Spleen (tissue), 13 donors: ENCODE measurements at regions of chr4 and their contacts with region 1.

Region 1: DNA sequence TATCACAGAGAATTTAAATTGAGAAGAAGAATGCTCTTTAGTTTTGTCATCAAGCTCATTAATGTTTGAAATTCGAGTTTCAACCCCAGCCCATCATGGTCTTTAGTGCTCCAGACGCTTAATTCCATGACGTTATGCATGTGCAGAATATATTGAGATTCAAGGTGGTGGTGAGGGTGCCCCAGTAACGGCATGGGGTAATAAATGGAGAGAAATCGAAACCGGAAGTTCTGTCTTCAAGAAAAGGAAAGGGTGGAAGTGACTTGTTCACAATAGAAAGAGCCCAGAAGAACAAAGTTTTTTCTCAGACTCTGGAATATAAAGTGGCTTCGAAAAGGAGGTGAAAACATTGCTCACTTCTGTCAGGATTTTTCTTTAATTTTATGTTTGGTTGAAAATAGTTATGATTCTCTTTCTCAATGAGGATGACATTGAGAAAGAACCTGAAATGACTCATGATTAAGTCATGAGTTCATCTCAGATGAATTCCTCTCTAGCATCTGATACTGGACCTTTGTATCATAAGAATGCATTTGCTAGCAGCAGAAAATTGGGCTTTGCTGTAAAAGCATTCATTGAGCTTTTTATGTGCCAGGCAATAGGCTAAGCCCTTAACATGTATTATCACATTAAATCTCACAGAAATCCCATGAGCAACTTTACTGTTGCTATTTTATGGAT is 779 bp upstream of the DDX60L start:
- DNase-seq: no peak
- H3K4me3 ChIP-seq: peak overlapping the region; percentile 59 to 84 (median 74)
- H3K27ac ChIP-seq: peak overlapping the region; percentile 90 to 99 (median 98)
- H3K4me1 ChIP-seq: peaks cover 11 to 48% (median 25%) of the 10 kb centered on the region in 6 donors
- H3K27me3 ChIP-seq: no peaks in the 10 kb centered on the region
- CTCF ChIP-seq: no peak
- POLR2A ChIP-seq: no peak

Region 2: DNA sequence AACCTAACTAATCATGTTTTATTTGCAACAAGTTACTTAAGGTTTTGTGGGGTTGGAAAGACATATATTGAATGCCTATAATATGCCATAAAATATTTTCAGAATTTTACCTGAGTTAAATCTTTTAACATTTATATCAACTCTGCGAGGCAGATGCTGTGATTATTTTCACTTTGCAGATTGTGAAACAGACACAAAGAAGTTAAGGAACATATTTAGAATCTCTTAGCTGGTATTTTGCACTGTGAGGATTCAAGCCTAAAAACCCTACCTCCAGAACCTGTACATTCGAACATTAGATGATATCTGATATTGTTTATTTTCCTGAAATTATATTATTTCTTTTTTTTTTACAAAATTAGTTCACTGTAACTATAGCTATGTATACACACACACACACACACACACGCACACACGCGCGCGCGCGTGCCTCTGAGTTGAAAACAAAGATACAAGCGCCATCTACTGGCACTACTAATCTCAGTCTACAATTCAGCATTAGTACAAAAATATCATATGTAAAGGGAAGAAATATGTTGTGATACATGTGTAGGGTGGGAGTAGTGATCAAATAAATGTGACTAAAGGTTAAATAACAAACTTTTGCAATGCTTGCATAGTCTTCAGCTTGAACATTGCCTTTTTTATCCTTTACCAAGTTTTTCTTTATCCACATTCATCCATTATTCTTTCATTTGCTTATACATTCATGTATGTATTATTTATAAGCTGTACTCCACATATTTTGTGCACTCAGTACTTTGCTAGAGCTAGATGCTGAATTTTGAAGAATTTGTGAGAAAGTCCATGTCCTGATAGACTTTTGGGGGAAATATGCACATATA is 327.3 kb before region 1 on chr4:
- intact Hi-C with region 1: no loop called
- DNase-seq: peak; percentile 82
- H3K4me3 ChIP-seq: peak overlapping the region in 5 of 8 donors; percentile 1 to 53 (median 20)
- H3K27ac ChIP-seq: no peak overlapping the region
- H3K4me1 ChIP-seq: peaks cover 0 to 8% (median 0%) of the 10 kb centered on the region in 6 donors
- H3K27me3 ChIP-seq: no peaks in the 10 kb centered on the region
- CTCF ChIP-seq: peak in 9 of 11 experiments; percentile 24 to 50 (median 38)
- POLR2A ChIP-seq: no peak

Region 3: DNA sequence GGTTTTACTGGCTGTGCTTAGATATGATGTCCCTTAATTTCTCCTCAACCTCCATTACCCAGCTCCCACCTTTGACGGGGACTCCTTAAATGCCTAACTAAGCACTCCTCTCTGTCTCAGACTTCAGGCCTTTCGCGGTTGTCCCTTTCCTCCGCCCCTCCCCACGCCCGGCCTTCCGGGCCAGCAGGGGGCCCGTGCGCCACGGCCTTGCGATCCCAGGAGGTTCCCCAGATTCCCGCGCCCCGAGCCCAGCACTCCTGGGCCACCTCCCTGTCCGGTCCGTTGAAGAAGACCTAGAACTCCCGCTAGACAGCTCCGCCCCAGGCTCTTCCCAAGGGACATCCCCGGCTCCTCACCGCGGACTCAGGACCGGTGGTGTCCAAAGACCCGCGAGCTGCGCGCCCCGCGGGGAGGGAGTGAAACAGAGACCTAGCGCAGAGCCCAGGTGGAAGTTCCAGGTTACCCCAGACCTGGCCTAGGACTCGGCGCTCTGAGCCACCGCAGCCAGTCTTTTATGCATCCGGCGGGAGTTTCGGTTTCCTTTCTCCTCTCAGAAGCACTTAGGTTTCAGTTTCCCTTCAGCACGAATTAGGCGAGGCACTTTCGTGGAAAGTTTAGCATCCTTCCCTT is 162.7 kb before region 1 on chr4 and contains the start of gene DDX60:
- intact Hi-C with region 1: loop called (anchors 10 kb)
- DNase-seq: peak; percentile 94
- H3K4me3 ChIP-seq: peak within 1 kb of the TSS; percentile 51 to 76 (median 62)
- H3K27ac ChIP-seq: peak within 1 kb of the TSS; percentile 96 to 99 (median 97)
- H3K4me1 ChIP-seq: peaks cover 7 to 44% (median 21%) of the 10 kb centered on the region in 6 donors
- H3K27me3 ChIP-seq: no peaks in the 10 kb centered on the region
- CTCF ChIP-seq: peak; percentile 15 to 55 (median 44)
- POLR2A ChIP-seq: peak in 1 of 3 donors; percentile 54
- total RNA-seq, gene DDX60: 32.6 to 56.2 (median 45.2) TPM